Caco-2 (cell line): ENCODE measurements at regions of chr7 and their contacts with region 1.

Region 1: GRCh38 chr7:128946923-128947830 is 9.4 kb downstream of the IRF5 start:
- DNase-seq: no peak
- H3K4me3 ChIP-seq: no peak overlapping the region
- H3K4me3 Mint-ChIP-seq: no peak overlapping the region
- H3K27ac Mint-ChIP-seq: no peak overlapping the region
- H3K4me1 ChIP-seq: no peaks in the 10 kb centered on the region
- H3K4me1 Mint-ChIP-seq: no peaks in the 10 kb centered on the region
- H3K27me3 ChIP-seq: no peaks in the 10 kb centered on the region
- H3K27me3 Mint-ChIP-seq: no peaks in the 10 kb centered on the region
- CTCF ChIP-seq: peak; percentile 17 to 27

Region 2: DNA sequence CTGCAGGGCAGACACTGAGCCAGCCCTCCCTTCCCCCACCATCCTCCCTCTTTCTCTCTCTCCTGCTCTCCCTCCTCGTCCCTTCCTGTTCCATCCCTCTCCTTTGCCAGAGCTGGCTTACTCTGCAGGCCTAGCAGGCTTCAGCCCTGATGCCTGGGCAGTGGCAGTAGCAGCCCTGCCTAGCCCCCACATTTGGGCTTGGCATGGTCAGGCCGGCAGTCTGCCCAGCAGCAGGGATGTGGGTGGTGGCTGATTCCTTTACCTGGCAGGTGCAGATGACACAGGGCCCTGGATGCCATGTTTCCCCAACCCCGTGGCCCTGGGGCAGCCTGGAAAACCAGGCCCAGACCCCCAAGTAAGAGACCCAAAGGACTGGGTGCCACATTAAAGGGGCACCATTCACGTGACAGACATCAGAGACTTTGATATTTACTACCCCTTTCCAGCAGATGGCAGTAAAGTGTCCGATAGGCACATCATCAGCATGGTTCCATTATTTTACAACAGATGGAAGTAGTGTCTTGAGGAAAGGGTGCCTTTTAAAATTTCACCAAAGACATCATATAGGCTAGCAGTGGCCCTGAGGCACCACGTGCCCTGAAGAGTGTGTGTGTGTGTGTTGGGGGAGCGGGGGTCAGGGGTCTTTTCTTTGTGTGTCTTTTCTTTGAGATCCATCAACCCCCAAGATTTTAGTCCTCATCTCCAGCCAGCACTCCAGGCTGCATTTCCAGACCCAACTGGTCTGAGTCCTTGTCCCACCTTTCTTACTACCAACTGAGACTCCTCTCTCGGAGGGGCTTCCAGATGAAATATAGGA is 42.6 kb before region 1 on chr7:
- CTCF ChIA-PET with region 1: no interaction called
- POLR2A ChIA-PET with region 1: no interaction called
- intact Hi-C with region 1: loop called (anchors 5 kb)
- DNase-seq: peak in 1 of 2 experiments; percentile 58
- H3K4me3 ChIP-seq: no peak overlapping the region
- H3K4me3 Mint-ChIP-seq: no peak overlapping the region
- H3K27ac Mint-ChIP-seq: no peak overlapping the region
- H3K4me1 ChIP-seq: no peaks in the 10 kb centered on the region
- H3K4me1 Mint-ChIP-seq: peaks cover 8% of the 10 kb centered on the region
- H3K27me3 ChIP-seq: no peaks in the 10 kb centered on the region
- H3K27me3 Mint-ChIP-seq: no peaks in the 10 kb centered on the region
- CTCF ChIP-seq: peak; percentile 56 to 62

Region 3: GRCh38 chr7:128933180-128933891 is 13.8 kb before region 1 on chr7:
- CTCF ChIA-PET with region 1: no interaction called
- POLR2A ChIA-PET with region 1: no interaction called
- intact Hi-C with region 1: no loop called
- DNase-seq: no peak
- H3K4me3 ChIP-seq: no peak overlapping the region
- H3K4me3 Mint-ChIP-seq: no peak overlapping the region
- H3K27ac Mint-ChIP-seq: no peak overlapping the region
- H3K4me1 ChIP-seq: peaks cover 8% of the 10 kb centered on the region
- H3K4me1 Mint-ChIP-seq: peaks cover 8% of the 10 kb centered on the region
- H3K27me3 ChIP-seq: no peaks in the 10 kb centered on the region
- H3K27me3 Mint-ChIP-seq: peaks cover 5% of the 10 kb centered on the region
- CTCF ChIP-seq: no peak